ENCODE measurements at regions of chr4 and their contacts with region 1.

Region 1: DNA sequence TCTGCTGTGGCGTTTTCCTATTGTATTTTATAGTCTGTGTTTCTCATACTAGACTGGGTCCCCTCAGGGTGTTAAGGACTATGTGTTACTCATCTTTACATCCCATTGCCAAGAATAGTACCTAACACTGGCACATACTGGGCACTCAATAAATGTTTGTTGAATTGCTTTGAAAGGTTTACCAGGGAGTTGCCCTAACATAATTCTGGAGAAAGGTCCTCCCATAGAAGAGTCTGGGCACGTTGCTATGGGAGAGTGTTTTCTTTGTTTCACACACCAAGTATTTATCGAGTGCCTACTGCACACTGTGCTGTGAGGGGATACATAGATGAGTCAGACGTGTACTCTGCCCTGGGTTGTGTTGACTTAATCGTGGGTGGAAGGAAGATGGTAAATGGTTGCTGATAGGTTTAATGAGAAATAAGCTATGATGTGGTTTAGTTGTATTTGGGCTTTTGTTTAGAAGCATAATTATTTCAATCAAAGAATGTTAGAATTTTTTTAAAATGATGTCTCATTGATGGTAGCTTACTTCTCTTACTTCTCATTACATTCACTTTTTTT is 42.9 kb downstream of the AFF1 start:
- DNase-seq: peak; percentile 88
- ATAC-seq: peak; percentile 98
- H3K4me3 ChIP-seq: peak overlapping the region; percentile 52
- H3K27ac ChIP-seq: peak overlapping the region; percentile 94
- H3K4me1 ChIP-seq: peaks cover 49% of the 10 kb centered on the region
- H3K27me3 ChIP-seq: no peaks in the 10 kb centered on the region
- CTCF ChIP-seq: no peak

Region 2: DNA sequence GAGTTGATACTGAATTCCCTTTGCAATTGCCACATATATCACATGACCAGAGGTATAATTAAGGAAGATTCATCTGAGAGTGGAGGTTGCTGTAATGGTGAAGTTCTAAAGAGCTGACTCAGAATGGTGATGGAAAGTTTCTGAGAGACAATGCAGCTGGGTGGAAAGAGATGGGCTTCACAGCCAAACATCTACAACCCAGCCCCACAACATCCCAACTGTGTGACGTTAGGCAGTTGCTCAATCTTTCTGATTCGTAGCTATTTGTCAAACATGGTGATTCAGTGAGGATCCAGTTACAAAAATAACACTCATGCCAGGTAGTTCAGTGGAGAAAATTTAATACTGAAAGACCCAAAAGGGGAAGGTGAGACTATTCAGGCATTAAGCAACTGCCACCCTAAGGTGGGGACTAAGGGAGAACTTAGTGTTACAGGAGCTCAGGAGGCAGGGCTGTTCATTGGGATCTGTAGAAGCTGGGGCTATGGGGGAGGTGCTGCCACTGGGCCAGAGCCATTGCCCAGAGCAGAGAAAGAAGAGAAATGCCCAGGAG is 49.8 kb before region 1 on chr4:
- CTCF ChIA-PET with region 1: no interaction called
- POLR2A ChIA-PET with region 1: no interaction called
- intact Hi-C with region 1: no loop called
- DNase-seq: peak; percentile 95
- ATAC-seq: peak; percentile 80
- H3K4me3 ChIP-seq: no peak overlapping the region
- H3K27ac ChIP-seq: peak overlapping the region; percentile 80
- H3K4me1 ChIP-seq: peaks cover 21% of the 10 kb centered on the region
- H3K27me3 ChIP-seq: no peaks in the 10 kb centered on the region
- CTCF ChIP-seq: no peak

Region 3: DNA sequence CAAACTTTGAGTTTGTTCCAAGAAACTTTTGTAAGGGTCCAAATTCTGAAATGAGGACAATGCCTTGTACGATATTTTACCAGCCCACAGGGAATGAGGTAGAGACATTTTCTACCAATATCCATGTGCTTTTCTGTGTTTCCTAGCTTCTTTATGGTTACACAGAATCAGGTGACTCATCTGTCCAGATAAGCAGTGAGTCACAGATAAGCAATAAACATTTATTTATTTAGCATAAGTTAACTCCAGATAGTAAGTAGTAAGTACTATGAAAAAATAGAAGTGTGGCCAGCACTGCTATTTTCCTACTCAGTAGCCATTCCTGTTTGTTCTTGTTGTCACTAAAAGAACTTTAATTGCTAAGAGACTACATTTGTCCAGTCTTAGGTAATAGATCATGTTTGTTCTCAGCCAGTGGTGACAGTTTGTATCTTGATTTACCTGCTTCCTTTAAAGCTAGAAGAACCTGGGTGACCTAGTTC is 35.5 kb before region 1 on chr4:
- CTCF ChIA-PET with region 1: no interaction called
- POLR2A ChIA-PET with region 1: no interaction called
- intact Hi-C with region 1: loop called (anchors 1 kb)
- DNase-seq: peak; percentile 54
- ATAC-seq: peak; percentile 79
- H3K4me3 ChIP-seq: no peak overlapping the region
- H3K27ac ChIP-seq: peak overlapping the region; percentile 24
- H3K4me1 ChIP-seq: peaks cover 30% of the 10 kb centered on the region
- H3K27me3 ChIP-seq: no peaks in the 10 kb centered on the region
- CTCF ChIP-seq: no peak

Region 4: GRCh38 chr4:86999136-86999643 is 21.5 kb after region 1 on chr4:
- CTCF ChIA-PET with region 1: no interaction called
- POLR2A ChIA-PET with region 1: interaction called, 11 read pairs
- intact Hi-C with region 1: no loop called
- DNase-seq: no peak
- ATAC-seq: no peak
- H3K4me3 ChIP-seq: no peak overlapping the region
- H3K27ac ChIP-seq: no peak overlapping the region
- H3K4me1 ChIP-seq: no peaks in the 10 kb centered on the region
- H3K27me3 ChIP-seq: no peaks in the 10 kb centered on the region
- CTCF ChIP-seq: no peak

Measured in PC-3 (cell line).